A673 (cell line): ENCODE measurements at regions of chr13 and their contacts with region 1.

Region 1: GRCh38 chr13:48624858-48625257 is 28.9 kb upstream of the CYSLTR2 start:
- DNase-seq: no peak
- H3K4me3 ChIP-seq: no peak overlapping the region
- H3K27ac ChIP-seq: no peak overlapping the region
- H3K4me1 ChIP-seq: no peaks in the 10 kb centered on the region
- H3K27me3 ChIP-seq: no peaks in the 10 kb centered on the region
- CTCF ChIP-seq: no peak

Region 2: GRCh38 chr13:48121733-48122132 is 503.1 kb before region 1 on chr13:
- CTCF ChIA-PET with region 1: interaction called, 12 read pairs
- POLR2A ChIA-PET with region 1: no interaction called
- intact Hi-C with region 1: no loop called
- DNase-seq: no peak
- H3K4me3 ChIP-seq: no peak overlapping the region
- H3K27ac ChIP-seq: no peak overlapping the region
- H3K4me1 ChIP-seq: no peaks in the 10 kb centered on the region
- H3K27me3 ChIP-seq: no peaks in the 10 kb centered on the region
- CTCF ChIP-seq: no peak